ENCODE measurements at regions of chr22 and their contacts with region 1.

Region 1: GRCh38 chr22:46013460-46014416 is 36.8 kb upstream of the WNT7B start:
- DNase-seq: peak; percentile 96
- H3K4me3 ChIP-seq: peak overlapping the region; percentile 70
- H3K4me3 Mint-ChIP-seq: peak overlapping the region; percentile 73
- H3K27ac Mint-ChIP-seq: peak overlapping the region; percentile 83
- H3K4me1 ChIP-seq: peaks cover 16% of the 10 kb centered on the region
- H3K4me1 Mint-ChIP-seq: no peaks in the 10 kb centered on the region
- H3K27me3 ChIP-seq: no peaks in the 10 kb centered on the region
- H3K27me3 Mint-ChIP-seq: no peaks in the 10 kb centered on the region
- CTCF ChIP-seq: peak; percentile 74 to 87

Region 2: GRCh38 chr22:46027192-46028105 is 13.7 kb after region 1 on chr22:
- CTCF ChIA-PET with region 1: interaction called, 20 read pairs
- POLR2A ChIA-PET with region 1: interaction called, 3 read pairs
- intact Hi-C with region 1: no loop called
- DNase-seq: peak; percentile 27 to 30
- H3K4me3 ChIP-seq: peak overlapping the region; percentile 36
- H3K4me3 Mint-ChIP-seq: peak overlapping the region; percentile 60
- H3K27ac Mint-ChIP-seq: no peak overlapping the region
- H3K4me1 ChIP-seq: no peaks in the 10 kb centered on the region; the same call in 1 of the 2 replicates
- H3K4me1 Mint-ChIP-seq: no peaks in the 10 kb centered on the region
- H3K27me3 ChIP-seq: no peaks in the 10 kb centered on the region
- H3K27me3 Mint-ChIP-seq: peaks cover 14% of the 10 kb centered on the region
- CTCF ChIP-seq: no peak

Region 3: GRCh38 chr22:46091277-46091977 is 77.7 kb after region 1 on chr22:
- CTCF ChIA-PET with region 1: no interaction called
- POLR2A ChIA-PET with region 1: interaction called, 10 read pairs
- intact Hi-C with region 1: no loop called
- DNase-seq: no peak
- H3K4me3 ChIP-seq: no peak overlapping the region
- H3K4me3 Mint-ChIP-seq: no peak overlapping the region
- H3K27ac Mint-ChIP-seq: no peak overlapping the region
- H3K4me1 ChIP-seq: peaks cover 9% of the 10 kb centered on the region
- H3K4me1 Mint-ChIP-seq: no peaks in the 10 kb centered on the region
- H3K27me3 ChIP-seq: no peaks in the 10 kb centered on the region
- H3K27me3 Mint-ChIP-seq: no peaks in the 10 kb centered on the region
- CTCF ChIP-seq: no peak

Measured in Caco-2 (cell line).